Pancreas (tissue), 10 donors: ENCODE measurements at regions of chr12 and their contacts with region 1.

Region 1: GRCh38 chr12:14167005-14167628 is 185.7 kb upstream of the GRIN2B start:
- DNase-seq: peak in 2 of 6 donors; percentile 14 to 64
- ATAC-seq: peak in 3 of 4 donors; percentile 67 to 84 (median 74)
- H3K4me3 ChIP-seq: no peak overlapping the region
- H3K27ac ChIP-seq: no peak overlapping the region
- H3K4me1 ChIP-seq: no peaks in the 10 kb centered on the region
- H3K27me3 ChIP-seq: no peaks in the 10 kb centered on the region
- CTCF ChIP-seq: peak; percentile 74 to 86 (median 84)

Region 2: GRCh38 chr12:13734584-13735152 is 432.4 kb before region 1 on chr12:
- intact Hi-C with region 1: loop called in 1 of 3 experiments (anchors 10 kb)
- DNase-seq: no peak
- ATAC-seq: no peak
- H3K4me3 ChIP-seq: no peak overlapping the region
- H3K27ac ChIP-seq: no peak overlapping the region
- H3K4me1 ChIP-seq: no peaks in the 10 kb centered on the region
- H3K27me3 ChIP-seq: no peaks in the 10 kb centered on the region
- CTCF ChIP-seq: no peak

Region 3: DNA sequence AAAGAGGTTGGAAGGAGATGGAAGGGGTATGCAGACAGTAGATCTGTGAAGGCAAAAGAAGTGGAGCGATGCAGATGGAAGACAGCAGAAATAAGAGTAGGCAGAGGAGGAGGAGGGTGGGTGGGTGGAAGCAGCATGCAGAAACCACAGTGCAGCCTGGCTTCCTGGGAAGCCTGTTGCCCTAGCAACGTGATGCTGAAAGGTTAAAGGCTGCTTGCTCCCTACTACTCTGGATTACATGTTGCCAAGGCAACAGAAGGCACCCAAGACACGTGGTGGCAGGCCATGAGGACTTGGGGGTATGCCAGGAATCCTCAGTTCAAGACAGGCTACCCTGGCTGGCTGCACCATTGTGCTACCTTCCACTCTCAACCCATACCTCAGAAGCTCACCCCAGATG is 315.3 kb before region 1 on chr12:
- intact Hi-C with region 1: loop called in 1 of 3 experiments (anchors 10 kb)
- DNase-seq: no peak
- ATAC-seq: no peak
- H3K4me3 ChIP-seq: no peak overlapping the region
- H3K27ac ChIP-seq: no peak overlapping the region
- H3K4me1 ChIP-seq: no peaks in the 10 kb centered on the region
- H3K27me3 ChIP-seq: no peaks in the 10 kb centered on the region
- CTCF ChIP-seq: no peak